ENCODE measurements at regions of chr5 and their contacts with region 1.

Region 1: DNA sequence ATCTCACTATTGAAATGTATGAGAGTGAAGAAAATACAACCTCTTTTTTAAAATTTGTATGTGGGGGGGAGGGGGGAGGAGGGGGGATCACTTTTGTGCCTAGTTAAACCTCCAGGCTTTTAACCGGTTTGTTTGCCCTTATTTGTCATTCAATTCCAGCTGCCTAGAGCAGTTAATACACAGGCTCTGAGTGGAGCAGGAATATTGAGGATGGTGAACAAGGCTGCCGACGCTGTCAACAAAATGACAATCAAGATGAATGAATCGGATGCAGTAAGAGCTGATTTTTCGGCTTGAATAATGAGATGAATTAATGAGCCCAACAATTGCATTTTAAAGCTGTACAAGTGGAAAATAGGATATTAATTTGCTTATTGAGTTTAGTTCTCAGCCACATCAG is 28.7 kb upstream of the SNX24 start:
- DNase-seq: no peak
- ATAC-seq: no peak
- H3K4me3 Mint-ChIP-seq: no peak overlapping the region
- H3K27ac Mint-ChIP-seq: no peak overlapping the region
- H3K4me1 Mint-ChIP-seq: no peaks in the 10 kb centered on the region
- H3K27me3 Mint-ChIP-seq: no peaks in the 10 kb centered on the region
- CTCF ChIP-seq: no peak

Region 2: GRCh38 chr5:122780296-122780695 is 36.5 kb before region 1 on chr5:
- CTCF ChIA-PET with region 1: no interaction called
- POLR2A ChIA-PET with region 1: no interaction called
- intact Hi-C with region 1: loop called (anchors 5 kb)
- DNase-seq: no peak
- ATAC-seq: peak; percentile 19
- H3K4me3 Mint-ChIP-seq: peak overlapping the region; percentile 64
- H3K27ac Mint-ChIP-seq: peak overlapping the region; percentile 85
- H3K4me1 Mint-ChIP-seq: peaks cover 72% of the 10 kb centered on the region
- H3K27me3 Mint-ChIP-seq: no peaks in the 10 kb centered on the region
- CTCF ChIP-seq: no peak

Region 3: DNA sequence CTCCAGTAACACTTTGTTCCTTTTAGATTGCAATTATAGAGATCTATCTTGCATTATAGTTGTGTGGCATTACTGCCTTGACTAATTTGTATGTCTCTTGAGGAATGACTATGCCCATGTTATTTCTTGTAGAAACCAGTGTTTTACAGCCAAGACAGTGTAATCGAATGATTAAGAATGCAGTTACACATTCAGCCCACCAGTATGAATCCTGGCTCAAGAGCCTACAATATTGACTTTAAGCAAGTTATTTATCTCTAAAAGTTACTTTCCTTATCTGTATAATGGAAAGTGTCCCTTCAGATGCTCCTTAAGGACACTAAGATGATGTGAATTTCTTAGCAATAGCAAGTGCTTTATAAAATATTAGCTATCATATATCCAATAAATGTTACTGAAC is 18.9 kb after region 1 on chr5:
- CTCF ChIA-PET with region 1: no interaction called
- POLR2A ChIA-PET with region 1: no interaction called
- intact Hi-C with region 1: loop called (anchors 2 kb)
- DNase-seq: no peak
- ATAC-seq: no peak
- H3K4me3 Mint-ChIP-seq: no peak overlapping the region
- H3K27ac Mint-ChIP-seq: no peak overlapping the region
- H3K4me1 Mint-ChIP-seq: peaks cover 9% of the 10 kb centered on the region
- H3K27me3 Mint-ChIP-seq: no peaks in the 10 kb centered on the region
- CTCF ChIP-seq: no peak